ENCODE measurements at regions of chrX and their contacts with region 1.

Region 1: GRCh38 chrX:148541544-148541983 is 41.1 kb downstream of the AFF2 start:
- DNase-seq: no peak
- ATAC-seq: no peak
- H3K4me3 Mint-ChIP-seq: no peak overlapping the region
- H3K27ac Mint-ChIP-seq: no peak overlapping the region
- H3K4me1 Mint-ChIP-seq: no peaks in the 10 kb centered on the region
- H3K27me3 Mint-ChIP-seq: no peaks in the 10 kb centered on the region
- CTCF ChIP-seq: no peak

Region 2: DNA sequence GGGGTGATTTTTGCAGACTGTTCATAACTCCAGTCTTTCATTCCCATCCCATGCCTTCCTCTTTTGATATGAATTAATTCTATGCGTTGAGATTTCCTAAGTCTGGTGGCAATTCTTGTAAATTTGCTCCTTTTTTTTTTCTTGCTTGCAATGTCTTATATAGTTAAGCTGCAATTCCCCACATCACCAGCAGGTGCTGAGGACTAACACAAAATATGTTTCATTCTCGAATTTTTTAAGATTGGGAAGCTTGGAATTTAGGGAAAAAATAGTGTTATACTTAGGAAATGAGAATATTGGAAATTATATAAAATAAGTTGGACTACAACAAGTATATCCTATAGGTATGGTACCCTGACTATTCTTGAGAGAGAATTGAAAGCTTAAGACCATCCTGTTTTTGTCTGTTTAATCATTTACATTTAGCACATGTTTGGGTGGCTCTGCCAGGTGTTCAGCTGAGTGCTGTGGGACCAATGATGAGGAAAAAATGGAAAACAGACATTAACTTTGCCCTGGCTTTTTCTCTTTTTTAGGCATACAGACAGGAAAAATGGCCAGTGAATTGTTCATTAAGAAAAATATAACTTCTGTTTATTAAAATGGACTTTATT is 11.0 kb before region 1 on chrX:
- CTCF ChIA-PET with region 1: interaction called, 10 read pairs
- POLR2A ChIA-PET with region 1: no interaction called
- intact Hi-C with region 1: no loop called
- DNase-seq: peak; percentile 16
- ATAC-seq: no peak
- H3K4me3 Mint-ChIP-seq: no peak overlapping the region
- H3K27ac Mint-ChIP-seq: no peak overlapping the region
- H3K4me1 Mint-ChIP-seq: peaks cover 3% of the 10 kb centered on the region
- H3K27me3 Mint-ChIP-seq: no peaks in the 10 kb centered on the region
- CTCF ChIP-seq: peak; percentile 55

Region 3: DNA sequence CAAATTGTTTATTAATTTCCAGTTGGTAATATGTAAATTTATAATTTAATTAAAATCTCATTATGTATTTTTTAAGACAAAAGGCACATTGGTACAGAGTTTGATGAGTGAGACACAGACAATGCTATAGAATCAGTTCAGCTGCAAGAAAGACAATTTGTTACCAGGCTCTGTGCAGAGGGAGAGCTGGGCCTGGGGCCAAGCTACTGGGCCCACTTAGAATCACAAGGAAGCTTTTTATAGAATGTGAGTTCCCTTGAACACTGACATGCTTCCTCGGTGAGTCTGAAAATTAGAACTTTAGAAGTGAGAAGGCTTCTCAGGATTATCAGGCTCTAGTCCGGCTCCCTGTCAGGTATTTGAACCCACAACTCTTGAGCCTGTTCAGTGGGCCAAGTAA is 87.9 kb after region 1 on chrX:
- CTCF ChIA-PET with region 1: no interaction called
- POLR2A ChIA-PET with region 1: no interaction called
- intact Hi-C with region 1: no loop called
- DNase-seq: no peak
- ATAC-seq: no peak
- H3K4me3 Mint-ChIP-seq: no peak overlapping the region
- H3K27ac Mint-ChIP-seq: no peak overlapping the region
- H3K4me1 Mint-ChIP-seq: no peaks in the 10 kb centered on the region
- H3K27me3 Mint-ChIP-seq: no peaks in the 10 kb centered on the region
- CTCF ChIP-seq: no peak

Measured in activated CD8-positive, alpha-beta T cell treated with anti-CD3 and anti-CD28 coated beads for 36 hours (primary cell).